SK-N-SH (cell line): ENCODE measurements at regions of chr5 and their contacts with region 1.

Region 1: DNA sequence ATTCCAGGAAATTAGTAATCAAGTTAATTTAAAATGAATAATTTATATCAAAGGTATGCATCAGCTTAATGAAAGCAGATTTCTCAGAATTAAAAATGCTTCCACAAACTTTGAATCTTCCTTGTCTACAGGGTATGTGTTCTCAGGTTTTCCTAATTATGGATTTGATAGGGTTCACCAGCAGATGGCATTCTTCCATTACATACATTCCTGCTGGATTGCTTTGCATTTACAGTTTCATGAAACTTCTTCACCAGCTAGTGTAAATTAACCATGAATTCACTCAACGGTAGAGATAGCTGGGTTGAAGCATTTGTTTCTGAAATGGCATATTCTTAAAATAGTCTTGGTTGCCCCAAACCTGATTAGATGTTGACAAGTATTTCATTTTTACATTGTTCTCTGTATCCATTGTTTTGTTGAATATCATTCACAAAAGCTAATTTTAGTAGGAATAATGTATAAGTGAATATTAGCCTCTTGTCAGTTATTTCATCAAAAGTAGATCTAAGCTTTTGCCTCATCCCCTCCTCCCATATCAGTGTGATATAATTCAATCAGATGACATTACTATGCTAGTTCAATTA is 68.7 kb upstream of the WDR41 start:
- DNase-seq: peak; percentile 40
- H3K4me3 ChIP-seq: no peak overlapping the region
- H3K27ac ChIP-seq: no peak overlapping the region
- H3K4me1 ChIP-seq: no peaks in the 10 kb centered on the region
- H3K27me3 ChIP-seq: no peaks in the 10 kb centered on the region
- CTCF ChIP-seq: peak; percentile 67
- EP300 ChIP-seq: no peak
- RAD21 ChIP-seq: peak; percentile 87

Region 2: GRCh38 chr5:77620426-77620825 is 59.7 kb after region 1 on chr5:
- CTCF ChIA-PET with region 1: interaction called, 10 read pairs
- POLR2A ChIA-PET with region 1: no interaction called
- DNase-seq: no peak
- H3K4me3 ChIP-seq: no peak overlapping the region
- H3K27ac ChIP-seq: no peak overlapping the region
- H3K4me1 ChIP-seq: no peaks in the 10 kb centered on the region
- H3K27me3 ChIP-seq: peaks cover 22% of the 10 kb centered on the region; the same call in 1 of the 2 replicates
- CTCF ChIP-seq: no peak
- EP300 ChIP-seq: no peak
- RAD21 ChIP-seq: no peak

Region 3: GRCh38 chr5:78001197-78001596 is 440.4 kb after region 1 on chr5:
- CTCF ChIA-PET with region 1: interaction called, 10 read pairs
- POLR2A ChIA-PET with region 1: no interaction called
- DNase-seq: no peak
- H3K4me3 ChIP-seq: no peak overlapping the region
- H3K27ac ChIP-seq: no peak overlapping the region
- H3K4me1 ChIP-seq: peaks cover 0 to 5% of the 10 kb centered on the region in 2 experiments; a peak in 2 of 4 replicates
- H3K27me3 ChIP-seq: no peaks in the 10 kb centered on the region
- CTCF ChIP-seq: no peak
- EP300 ChIP-seq: no peak
- RAD21 ChIP-seq: no peak